ENCODE measurements at regions of chr19 and their contacts with region 1.

Region 1: DNA sequence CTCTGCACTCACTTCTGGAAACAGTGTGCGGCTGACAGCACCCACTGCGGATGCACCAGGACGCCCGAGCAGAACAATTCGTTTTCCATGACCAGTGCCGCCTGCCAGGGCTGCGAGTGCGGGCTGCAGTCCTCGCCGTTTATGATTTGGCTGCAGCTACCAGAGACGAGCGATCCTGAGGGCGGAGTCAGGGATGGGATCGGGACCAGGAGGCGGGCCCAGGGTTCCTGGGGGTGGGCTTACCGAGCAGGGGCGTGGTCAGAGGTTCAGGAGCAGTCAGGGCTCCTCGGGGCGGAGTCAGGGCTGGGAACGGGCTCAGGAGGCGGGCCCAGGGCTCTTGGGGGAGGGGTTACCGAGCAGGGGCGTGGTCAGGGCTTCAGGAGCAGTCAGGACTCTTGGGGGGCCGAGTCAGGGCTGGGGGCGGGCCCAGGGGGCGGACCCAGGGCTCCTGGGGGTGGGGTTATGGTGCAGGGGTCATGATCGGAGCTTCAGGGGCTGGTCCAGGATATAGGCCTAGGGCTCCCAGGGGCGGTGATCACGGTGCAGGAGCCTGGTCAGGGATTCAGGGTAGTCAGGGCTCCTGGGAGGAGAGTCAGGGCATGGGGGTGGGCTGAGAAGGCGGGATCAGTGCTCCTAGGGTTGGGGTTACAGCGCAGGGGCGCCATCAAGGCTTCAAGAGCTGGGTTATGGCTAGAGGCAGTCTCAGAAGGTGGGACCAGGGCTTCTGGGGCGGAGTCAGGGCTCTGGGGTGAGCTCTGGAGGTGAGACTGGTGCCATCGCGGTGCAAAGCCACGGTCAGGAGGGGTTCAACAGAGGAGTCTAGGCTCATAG is 1.7 kb downstream of the KLK4 start:
- H3K4me3 ChIP-seq: peak overlapping the region; percentile 18
- H3K27ac ChIP-seq: no peak overlapping the region
- H3K4me1 ChIP-seq: peaks cover 3% of the 10 kb centered on the region
- CTCF ChIP-seq: no peak

Region 2: GRCh38 chr19:50893047-50893737 is 16.3 kb before region 1 on chr19:
- CTCF ChIA-PET with region 1: interaction called, 13 read pairs
- POLR2A ChIA-PET with region 1: interaction called, 3 read pairs
- H3K4me3 ChIP-seq: no peak overlapping the region
- H3K27ac ChIP-seq: no peak overlapping the region
- H3K4me1 ChIP-seq: no peaks in the 10 kb centered on the region; the same call in 1 of the 2 replicates
- CTCF ChIP-seq: peak; percentile 16; the same call in 1 of the 2 replicates

Region 3: DNA sequence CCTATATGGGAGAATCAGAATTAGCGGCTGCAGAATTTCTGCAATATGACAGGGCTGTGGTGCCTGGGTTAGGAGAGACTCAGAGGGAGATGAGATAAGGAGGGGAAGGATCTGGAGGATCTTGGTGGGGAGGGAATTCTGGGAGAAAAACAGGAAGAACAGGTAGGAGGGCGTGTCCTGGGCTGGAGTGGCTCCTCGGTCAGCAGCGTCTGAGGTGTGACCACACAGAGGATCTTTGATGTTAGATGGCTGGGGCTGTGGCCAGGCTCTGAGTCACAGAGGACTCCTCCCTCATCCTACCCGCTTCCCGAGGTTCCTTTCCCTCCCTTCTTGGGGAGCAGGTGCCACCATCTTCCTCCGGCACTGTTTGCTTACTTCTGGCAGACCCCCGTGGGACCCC is 66.3 kb after region 1 on chr19:
- CTCF ChIA-PET with region 1: no interaction called
- POLR2A ChIA-PET with region 1: no interaction called
- H3K4me3 ChIP-seq: no peak overlapping the region
- H3K27ac ChIP-seq: no peak overlapping the region
- H3K4me1 ChIP-seq: no peaks in the 10 kb centered on the region
- CTCF ChIP-seq: no peak

Measured in HEK293 (cell line).